ENCODE measurements at regions of chr11 and their contacts with region 1.

Region 1: DNA sequence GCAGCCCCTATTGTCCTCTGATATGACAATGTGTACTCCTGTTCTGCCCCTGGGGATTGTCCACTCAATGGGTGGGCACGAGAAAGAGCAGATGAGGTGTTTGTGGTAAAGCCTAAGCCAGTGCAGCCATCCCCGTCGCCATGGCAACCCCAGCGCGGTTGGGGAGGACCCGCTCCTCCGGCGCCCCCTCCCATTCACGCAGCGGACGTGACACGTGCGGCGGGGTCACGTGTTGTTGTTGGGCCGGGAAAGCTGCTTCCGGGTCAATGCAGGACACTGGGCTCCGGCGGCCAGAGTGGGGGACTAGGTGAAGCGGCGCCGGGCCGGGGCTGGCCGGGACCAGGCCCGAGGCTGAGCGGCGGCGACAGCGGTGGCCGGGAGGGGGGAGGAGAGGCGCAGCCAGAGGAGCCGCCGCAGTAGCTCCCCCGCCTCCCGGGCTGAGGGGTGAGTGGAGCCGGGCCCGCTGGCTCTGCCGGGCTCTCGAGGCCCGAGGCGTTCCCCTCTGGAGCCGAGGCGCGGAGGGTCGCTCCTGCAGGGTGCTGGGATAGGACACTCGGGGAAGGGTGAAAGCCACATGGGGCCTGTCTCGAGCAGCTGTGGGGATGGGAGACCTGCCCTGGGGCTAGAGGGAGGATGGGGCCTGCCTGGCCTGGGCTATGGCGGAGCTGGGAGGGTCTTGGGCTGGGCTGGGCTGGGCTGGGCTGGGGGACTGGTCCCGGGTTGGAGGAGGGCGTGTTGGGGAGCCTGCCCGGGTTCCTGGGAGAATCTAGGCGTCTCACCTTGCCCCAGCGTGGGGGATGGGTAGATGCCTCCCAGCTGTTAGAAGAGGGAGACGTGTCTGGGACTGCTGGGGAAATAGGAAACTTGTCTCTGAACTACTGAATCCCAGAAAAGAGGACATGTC is at the start of gene TBCEL:
- DNase-seq: peak; percentile 88
- H3K4me3 ChIP-seq: peak within 1 kb of the TSS; percentile 36 to 95 (median 56)
- H3K27ac ChIP-seq: peak within 1 kb of the TSS; percentile 79
- H3K4me1 ChIP-seq: peaks cover 7% of the 10 kb centered on the region
- H3K27me3 ChIP-seq: no peaks in the 10 kb centered on the region
- CTCF ChIP-seq: no peak
- POLR2A ChIP-seq: peak; percentile 65
- total RNA-seq, gene TBCEL: 19.5 and 19.7 TPM in 2 replicates

Region 2: DNA sequence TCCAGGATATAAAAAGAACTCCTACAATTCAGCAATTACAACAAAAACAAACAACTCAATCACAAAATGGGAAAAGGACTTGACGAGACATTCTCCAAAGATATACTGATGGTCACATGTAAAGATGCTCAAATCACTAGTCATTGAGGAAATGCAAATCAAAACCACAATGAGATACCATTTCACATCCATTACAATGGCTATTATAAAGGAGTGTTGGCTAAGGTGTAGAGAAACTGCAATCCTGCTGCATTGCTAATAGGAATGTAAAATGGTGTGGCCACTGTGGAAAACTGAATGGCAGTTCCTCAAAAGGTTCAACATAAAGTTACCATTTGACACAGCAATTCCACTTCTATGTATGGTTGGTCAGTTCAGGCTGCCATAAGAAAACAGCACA is 12.0 kb before region 1 on chr11:
- CTCF ChIA-PET with region 1: no interaction called
- POLR2A ChIA-PET with region 1: no interaction called
- dilution Hi-C with region 1: no loop called
- intact Hi-C with region 1: no loop called
- DNase-seq: no peak
- H3K4me3 ChIP-seq: no peak overlapping the region
- H3K27ac ChIP-seq: no peak overlapping the region
- H3K4me1 ChIP-seq: no peaks in the 10 kb centered on the region
- H3K27me3 ChIP-seq: peaks cover 0 to 6% of the 10 kb centered on the region in 2 experiments
- CTCF ChIP-seq: no peak
- POLR2A ChIP-seq: no peak

Region 3: GRCh38 chr11:121039971-121040613 is 16.0 kb after region 1 on chr11:
- CTCF ChIA-PET with region 1: interaction called, 6 read pairs
- POLR2A ChIA-PET with region 1: interaction called, 7 read pairs
- dilution Hi-C with region 1: no loop called
- intact Hi-C with region 1: loop called (anchors 2 kb)
- DNase-seq: peak; percentile 50
- H3K4me3 ChIP-seq: no peak overlapping the region
- H3K27ac ChIP-seq: no peak overlapping the region
- H3K4me1 ChIP-seq: peaks cover 19% of the 10 kb centered on the region
- H3K27me3 ChIP-seq: no peaks in the 10 kb centered on the region
- CTCF ChIP-seq: no peak
- POLR2A ChIP-seq: no peak